Activated naive CD4-positive, alpha-beta T cell treated with anti-CD3 and anti-CD28 coated beads, Interleukin-2, amount 10 ng/mL, durations not matched to agents 7 days and 5 days (primary cell): ENCODE measurements at regions of chr17 and their contacts with region 1.

Region 1: GRCh38 chr17:59004338-59005111 is 102.2 kb downstream of the TRIM37 start:
- DNase-seq: peak; percentile 80
- H3K4me3 Mint-ChIP-seq: no peak overlapping the region
- H3K27ac Mint-ChIP-seq: peak overlapping the region; percentile 50
- H3K4me1 Mint-ChIP-seq: peaks cover 24% of the 10 kb centered on the region
- H3K27me3 Mint-ChIP-seq: no peaks in the 10 kb centered on the region

Region 2: DNA sequence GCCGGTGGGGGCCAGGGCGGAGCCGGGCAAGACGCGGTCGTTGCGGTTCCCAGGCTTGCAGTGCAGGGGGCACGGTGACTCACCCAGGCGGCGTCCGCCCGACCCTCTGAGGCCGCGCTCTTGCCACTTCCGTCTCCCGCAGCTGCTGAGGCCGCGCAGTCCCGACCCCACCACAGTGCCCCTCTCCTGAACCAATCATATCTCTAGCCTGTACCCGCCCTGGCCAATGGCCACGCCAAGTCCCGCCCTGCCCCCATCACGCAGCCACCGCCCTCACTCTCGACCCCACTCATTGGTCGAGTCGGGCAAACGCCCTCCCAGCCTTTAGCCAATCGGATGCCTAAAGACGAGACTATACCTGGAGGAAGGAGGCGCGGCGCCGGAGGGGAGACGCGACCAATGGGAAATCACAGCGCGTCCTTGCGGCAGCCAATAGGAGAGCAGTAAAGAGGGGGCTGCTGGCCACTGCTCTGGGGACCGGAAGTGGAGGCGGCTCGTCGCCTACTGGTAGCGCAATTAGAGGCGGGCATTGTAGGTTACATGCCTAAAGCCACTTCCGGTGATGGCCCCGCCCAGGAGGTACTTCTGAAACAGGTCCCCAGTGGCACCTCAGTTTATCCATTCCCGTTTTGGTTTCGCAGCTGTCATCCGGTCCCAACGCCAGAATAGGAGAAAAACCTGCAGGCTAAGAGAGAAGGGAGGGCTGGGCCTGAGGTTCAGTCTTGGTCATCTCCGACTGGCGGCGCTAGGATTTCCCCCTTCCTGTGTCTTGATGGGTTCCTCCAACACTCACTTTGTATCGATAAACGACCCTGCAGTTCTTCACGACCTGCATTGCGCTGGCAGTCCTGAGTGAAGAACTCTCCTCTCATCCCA is 486.6 kb before region 1 on chr17:
- CTCF ChIA-PET with region 1: interaction called, 29 read pairs
- DNase-seq: peak; percentile 100
- H3K4me3 Mint-ChIP-seq: peak overlapping the region; percentile 86
- H3K27ac Mint-ChIP-seq: peak overlapping the region; percentile 95
- H3K4me1 Mint-ChIP-seq: peaks cover 53% of the 10 kb centered on the region
- H3K27me3 Mint-ChIP-seq: peaks cover 10% of the 10 kb centered on the region

Region 3: GRCh38 chr17:58577642-58578091 is 426.9 kb before region 1 on chr17:
- CTCF ChIA-PET with region 1: interaction called, 13 read pairs
- DNase-seq: peak; percentile 60
- H3K4me3 Mint-ChIP-seq: no peak overlapping the region
- H3K27ac Mint-ChIP-seq: no peak overlapping the region
- H3K4me1 Mint-ChIP-seq: peaks cover 4% of the 10 kb centered on the region
- H3K27me3 Mint-ChIP-seq: peaks cover 5% of the 10 kb centered on the region

Region 4: GRCh38 chr17:58587702-58588254 is 416.7 kb before region 1 on chr17:
- CTCF ChIA-PET with region 1: interaction called, 15 read pairs
- DNase-seq: peak; percentile 70
- H3K4me3 Mint-ChIP-seq: no peak overlapping the region
- H3K27ac Mint-ChIP-seq: no peak overlapping the region
- H3K4me1 Mint-ChIP-seq: peaks cover 4% of the 10 kb centered on the region
- H3K27me3 Mint-ChIP-seq: peaks cover 10% of the 10 kb centered on the region

Region 5: GRCh38 chr17:58710936-58711775 is 293.4 kb before region 1 on chr17:
- CTCF ChIA-PET with region 1: interaction called, 35 read pairs
- DNase-seq: peak; percentile 59
- H3K4me3 Mint-ChIP-seq: no peak overlapping the region
- H3K27ac Mint-ChIP-seq: no peak overlapping the region
- H3K4me1 Mint-ChIP-seq: peaks cover 8% of the 10 kb centered on the region
- H3K27me3 Mint-ChIP-seq: no peaks in the 10 kb centered on the region